Activated CD8-positive, alpha-beta memory T cell treated with anti-CD3 and anti-CD28 coated beads, Interleukin-2, amount 10 ng/mL, durations not matched to agents 7 days and 5 days (primary cell): ENCODE measurements at regions of chr11 and their contacts with region 1.

Region 1: DNA sequence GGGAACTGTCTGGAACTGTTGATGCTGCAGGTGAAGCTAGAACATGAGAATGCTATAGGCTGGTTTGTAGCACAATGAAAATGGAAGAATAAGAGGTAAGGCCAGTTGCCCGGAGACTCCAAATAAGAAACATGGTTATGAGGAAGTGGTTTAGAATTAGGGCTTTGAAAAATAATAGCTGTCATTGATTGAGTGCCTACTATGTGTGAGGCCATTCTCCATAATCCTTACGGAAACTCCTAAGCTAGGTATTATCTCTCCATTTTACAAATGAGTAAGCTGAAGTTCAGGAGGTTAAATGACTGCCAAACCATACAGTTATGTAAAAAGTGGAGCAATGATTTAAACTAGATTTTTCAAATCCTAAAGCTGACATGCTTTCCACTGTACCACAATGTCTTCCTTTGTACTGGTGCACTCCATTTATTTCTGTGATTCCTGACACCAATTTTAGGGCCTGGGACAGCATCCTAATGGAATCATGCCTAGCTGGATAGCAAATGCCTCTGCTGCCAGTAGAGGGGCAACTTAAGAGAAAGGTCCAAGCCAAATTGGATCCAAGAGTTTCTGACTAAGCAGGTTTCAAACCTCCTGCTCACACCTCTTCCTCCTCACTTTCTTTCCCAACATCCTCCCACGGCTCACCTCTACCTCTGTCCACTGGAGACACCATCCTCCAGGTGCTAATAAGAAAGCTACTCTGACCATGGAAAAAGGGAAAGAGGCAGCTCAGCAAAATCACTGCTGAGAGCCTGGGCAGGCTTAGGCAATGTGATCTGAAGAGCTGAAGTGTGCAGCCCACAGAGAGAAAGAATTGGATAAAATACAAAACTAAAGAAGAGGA is 46.9 kb upstream of the PICALM start:
- DNase-seq: no peak
- ATAC-seq: peak; percentile 43
- H3K4me3 Mint-ChIP-seq: peak overlapping the region; percentile 11
- H3K27ac Mint-ChIP-seq: peak overlapping the region; percentile 70
- H3K4me1 Mint-ChIP-seq: peaks cover 32% of the 10 kb centered on the region
- H3K27me3 Mint-ChIP-seq: no peaks in the 10 kb centered on the region

Region 2: DNA sequence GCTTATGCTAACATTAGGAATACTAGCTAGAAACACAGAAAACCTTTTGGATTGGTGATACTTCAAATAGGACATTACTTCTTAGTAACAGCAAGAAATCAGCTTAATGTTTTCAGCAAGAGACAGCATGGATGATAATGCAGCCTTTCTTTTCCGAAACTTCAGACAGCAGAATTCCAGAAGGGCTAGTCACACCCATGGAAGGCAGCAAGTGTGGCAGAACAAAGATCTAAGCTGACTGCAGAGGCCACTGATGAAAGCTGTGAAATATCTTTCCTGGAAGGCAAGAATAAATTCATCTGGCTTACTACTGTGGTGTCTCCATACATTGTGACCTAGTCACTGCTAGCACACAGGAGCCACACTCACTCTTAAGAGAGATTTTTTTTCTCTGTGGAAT is 160.2 kb before region 1 on chr11:
- CTCF ChIA-PET with region 1: no interaction called
- DNase-seq: no peak
- ATAC-seq: no peak
- H3K4me3 Mint-ChIP-seq: no peak overlapping the region
- H3K27ac Mint-ChIP-seq: no peak overlapping the region
- H3K4me1 Mint-ChIP-seq: peaks cover 7% of the 10 kb centered on the region
- H3K27me3 Mint-ChIP-seq: no peaks in the 10 kb centered on the region

Region 3: DNA sequence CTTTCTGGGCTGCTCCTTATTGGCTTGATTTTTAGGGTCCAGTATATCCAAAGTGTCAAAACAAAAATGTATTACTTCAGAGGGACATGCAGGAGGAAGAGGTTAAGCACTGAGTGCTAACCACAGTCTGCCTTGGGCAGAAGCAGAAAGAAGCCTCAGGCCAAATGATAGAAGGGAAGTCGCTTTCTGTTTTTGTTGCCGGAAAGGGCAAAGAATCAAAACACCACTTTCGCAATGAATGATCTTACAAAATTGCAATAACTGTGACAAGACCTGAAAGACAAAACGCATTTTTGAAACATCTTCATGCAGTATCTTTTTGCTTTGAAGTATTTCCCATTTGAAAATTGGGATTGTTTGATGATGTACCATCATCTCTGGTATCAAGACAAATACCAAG is 23.2 kb after region 1 on chr11:
- CTCF ChIA-PET with region 1: interaction called, 12 read pairs
- DNase-seq: peak; percentile 80
- ATAC-seq: peak; percentile 75
- H3K4me3 Mint-ChIP-seq: peak overlapping the region; percentile 34
- H3K27ac Mint-ChIP-seq: peak overlapping the region; percentile 89
- H3K4me1 Mint-ChIP-seq: peaks cover 64% of the 10 kb centered on the region
- H3K27me3 Mint-ChIP-seq: no peaks in the 10 kb centered on the region

Region 4: DNA sequence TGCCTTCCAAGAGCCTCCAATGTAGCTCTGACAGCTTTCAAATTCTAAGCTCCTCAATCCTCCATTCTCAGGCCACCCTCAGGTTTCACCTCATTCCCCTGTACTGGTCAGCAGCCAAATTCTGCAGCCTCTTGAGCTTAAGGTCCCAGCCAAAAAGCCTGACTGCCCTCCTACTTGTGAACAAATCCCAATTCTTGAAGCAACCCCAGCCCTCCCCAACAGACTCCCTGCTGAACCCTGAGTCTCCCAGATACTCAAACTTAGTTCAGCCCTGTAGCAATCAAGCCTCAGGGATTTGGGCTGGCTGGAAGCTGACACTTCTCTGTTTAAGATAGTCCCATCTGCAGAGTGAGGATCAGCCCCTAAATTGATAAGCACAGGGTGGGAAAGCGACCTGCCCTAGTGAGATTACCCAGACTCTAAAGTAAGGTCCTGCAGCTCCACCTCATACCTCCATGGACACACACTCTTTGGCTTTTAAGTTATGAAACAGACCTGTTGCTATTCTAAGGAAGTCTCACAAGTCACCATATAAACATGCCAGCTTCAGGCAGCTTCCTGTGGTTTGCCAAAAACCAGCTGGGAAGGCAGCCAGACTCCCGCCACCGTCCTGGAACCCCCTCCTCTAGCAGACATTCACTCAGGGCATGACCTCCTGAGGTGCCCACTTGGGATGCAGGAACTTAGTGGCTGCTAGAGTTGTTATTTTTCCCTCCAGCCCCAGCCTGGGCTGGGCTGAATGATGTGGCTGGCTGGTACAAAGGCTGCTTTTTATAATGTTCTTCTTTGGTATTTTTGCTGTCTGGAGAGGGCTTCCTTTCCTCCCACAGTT is 35.6 kb after region 1 on chr11:
- CTCF ChIA-PET with region 1: no interaction called
- DNase-seq: no peak
- ATAC-seq: peak; percentile 63
- H3K4me3 Mint-ChIP-seq: no peak overlapping the region
- H3K27ac Mint-ChIP-seq: peak overlapping the region; percentile 61
- H3K4me1 Mint-ChIP-seq: peaks cover 33% of the 10 kb centered on the region
- H3K27me3 Mint-ChIP-seq: no peaks in the 10 kb centered on the region

Region 5: DNA sequence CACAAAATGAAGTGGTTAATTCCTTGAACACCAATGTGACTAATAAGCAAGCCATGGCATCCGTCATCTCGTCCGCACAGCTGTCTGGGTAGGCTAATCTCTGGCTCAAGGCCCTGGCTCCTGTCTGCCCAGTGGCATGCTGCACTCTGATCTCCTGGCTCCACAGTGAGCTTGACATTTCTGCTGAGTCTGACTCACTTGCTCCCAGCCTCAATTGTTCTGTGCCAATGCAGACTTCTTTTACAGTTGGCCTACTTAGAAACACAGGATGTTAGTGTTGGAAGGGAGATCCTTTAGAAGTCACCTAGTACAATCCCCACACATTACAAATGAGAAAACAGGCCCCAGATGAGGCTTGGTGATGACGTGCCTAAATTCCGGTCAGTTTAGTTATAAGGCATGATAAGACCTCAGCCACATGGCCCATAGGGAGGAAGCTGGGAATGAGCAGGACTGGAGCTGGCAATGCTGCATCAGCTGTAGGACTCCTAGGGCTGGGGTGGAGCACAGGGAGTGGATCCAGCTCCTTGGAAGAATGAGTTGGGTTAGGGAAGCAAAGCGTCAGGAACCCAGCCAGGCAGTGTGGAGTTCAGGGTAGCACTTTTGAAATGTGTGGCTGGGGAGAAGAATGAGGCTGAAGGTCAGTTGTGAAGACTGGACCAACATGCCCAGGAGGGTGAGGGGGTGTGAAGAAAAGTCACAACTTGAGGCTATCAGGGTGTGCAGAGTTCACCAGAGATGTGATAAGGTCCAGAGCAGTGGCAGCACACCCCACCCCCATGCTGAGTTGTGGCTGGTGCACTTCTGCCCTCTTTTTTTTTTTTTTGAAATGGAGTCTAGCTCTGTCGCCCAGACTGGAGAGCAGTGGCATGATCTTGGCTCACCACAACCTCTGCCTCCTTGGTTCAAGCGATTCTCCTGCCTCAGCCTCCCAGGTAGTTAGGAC is 58.6 kb after region 1 on chr11:
- CTCF ChIA-PET with region 1: no interaction called
- DNase-seq: no peak
- ATAC-seq: no peak
- H3K4me3 Mint-ChIP-seq: no peak overlapping the region
- H3K27ac Mint-ChIP-seq: no peak overlapping the region
- H3K4me1 Mint-ChIP-seq: peaks cover 30% of the 10 kb centered on the region
- H3K27me3 Mint-ChIP-seq: no peaks in the 10 kb centered on the region